Activated T-helper 1 cell treated with anti-CD3 and anti-CD28 coated beads, Interleukin-12 subunit alpha, Interleukin-12 subunit beta, Interleukin-2, Interleukin-4 antibody, amounts not matched to agents 30 ng/mL and 10 ng/mL and 1 ng/mL, durations not matched to agents 14 hours and 24 hours and 36 hours (primary cell): ENCODE measurements at regions of chr1 and their contacts with region 1.

Region 1: DNA sequence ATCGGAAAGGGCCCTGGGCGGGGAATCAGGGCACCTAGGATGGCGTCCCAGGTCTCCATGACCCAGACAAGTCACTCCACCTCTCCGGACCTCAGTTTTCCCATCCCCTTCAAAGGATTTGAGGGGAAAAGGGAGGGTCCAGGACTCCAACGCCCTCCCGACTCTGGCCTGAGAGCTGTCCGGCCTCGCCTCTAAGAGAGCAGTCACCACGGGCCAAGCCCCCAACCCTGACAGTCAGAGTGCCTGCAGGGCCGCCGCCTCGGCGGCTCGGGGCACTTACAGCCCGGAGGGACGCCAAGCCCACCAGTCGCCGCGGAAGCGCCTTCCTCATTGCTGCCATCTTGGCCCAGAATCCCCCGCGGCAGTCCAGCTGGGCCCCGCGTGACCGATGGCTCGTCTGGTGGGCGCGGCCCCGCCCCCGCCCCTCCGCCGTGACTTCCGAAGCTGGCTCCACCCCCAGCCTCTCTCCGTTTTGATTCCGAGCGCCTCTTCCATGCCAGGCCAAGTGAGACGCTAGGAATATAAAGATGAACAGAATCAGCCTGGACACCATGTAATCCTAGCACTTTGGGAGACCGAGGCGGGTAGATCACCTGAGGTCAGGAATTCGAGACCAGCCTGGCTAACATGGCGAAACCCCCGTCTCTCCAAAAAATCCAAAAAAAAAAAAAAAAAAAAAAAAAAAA is at the start of gene HMGCL:
- DNase-seq: peak; percentile 81
- H3K4me3 Mint-ChIP-seq: peak within 1 kb of the TSS; percentile 94
- H3K27ac Mint-ChIP-seq: peak within 1 kb of the TSS; percentile 89
- H3K4me1 Mint-ChIP-seq: peaks cover 15% of the 10 kb centered on the region
- H3K27me3 Mint-ChIP-seq: no peaks in the 10 kb centered on the region
- total RNA-seq, gene HMGCL: 18.5 and 19.9 TPM in 2 replicates

Region 2: GRCh38 chr1:23800400-23801337 is 24.6 kb before region 1 on chr1 and contains the start of gene GALE:
- intact Hi-C with region 1: loop called (anchors 1 kb)
- DNase-seq: peak; percentile 93
- H3K4me3 Mint-ChIP-seq: peak within 1 kb of the TSS; percentile 97
- H3K27ac Mint-ChIP-seq: peak within 1 kb of the TSS; percentile 88
- H3K4me1 Mint-ChIP-seq: peaks cover 13% of the 10 kb centered on the region
- H3K27me3 Mint-ChIP-seq: peaks cover 2% of the 10 kb centered on the region
- total RNA-seq, gene GALE: 62.4 and 63.4 TPM in 2 replicates

Region 3: GRCh38 chr1:23838401-23838866 is 13.2 kb after region 1 on chr1:
- intact Hi-C with region 1: loop called (anchors 1 kb)
- DNase-seq: peak; percentile 53
- H3K4me3 Mint-ChIP-seq: peak overlapping the region; percentile 75
- H3K27ac Mint-ChIP-seq: no peak overlapping the region
- H3K4me1 Mint-ChIP-seq: peaks cover 14% of the 10 kb centered on the region
- H3K27me3 Mint-ChIP-seq: peaks cover 10% of the 10 kb centered on the region